CD4-positive, alpha-beta memory T cell (primary cell): ENCODE measurements at regions of chr10 and their contacts with region 1.

Region 1: DNA sequence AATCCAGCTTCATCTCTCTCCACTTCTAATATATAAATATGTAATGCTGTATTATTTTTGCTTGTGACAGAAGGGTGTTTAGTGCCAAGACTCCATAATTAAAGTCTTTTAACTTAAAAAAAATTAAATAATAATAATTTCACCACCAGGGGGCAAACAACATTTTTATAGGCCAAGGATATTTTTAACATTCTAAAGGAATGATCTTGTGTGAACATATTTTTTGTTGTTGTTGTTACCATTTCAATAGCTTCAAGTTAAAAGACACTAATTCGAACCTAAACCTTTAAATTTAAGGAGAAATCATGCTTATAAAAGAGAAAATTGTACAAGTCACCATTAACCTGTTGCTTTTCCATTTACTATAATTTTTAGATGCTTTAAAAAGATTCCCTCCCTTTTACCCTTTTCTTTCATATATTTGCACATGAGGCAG is 7.5 kb upstream of the DNAJC1 start:
- DNase-seq: peak in 4 of 5 donors; percentile 38 to 51 (median 44)
- H3K4me3 ChIP-seq: no peak overlapping the region
- H3K4me3 Mint-ChIP-seq: no peak overlapping the region
- H3K27ac ChIP-seq: no peak overlapping the region
- H3K27ac Mint-ChIP-seq: no peak overlapping the region
- H3K4me1 ChIP-seq: no peaks in the 10 kb centered on the region
- H3K4me1 Mint-ChIP-seq: peaks cover 0 to 4% (median under 1%) of the 10 kb centered on the region in 4 donors
- H3K27me3 ChIP-seq: no peaks in the 10 kb centered on the region
- H3K27me3 Mint-ChIP-seq: peaks cover 5 to 7% of the 10 kb centered on the region in 2 donors

Region 2: DNA sequence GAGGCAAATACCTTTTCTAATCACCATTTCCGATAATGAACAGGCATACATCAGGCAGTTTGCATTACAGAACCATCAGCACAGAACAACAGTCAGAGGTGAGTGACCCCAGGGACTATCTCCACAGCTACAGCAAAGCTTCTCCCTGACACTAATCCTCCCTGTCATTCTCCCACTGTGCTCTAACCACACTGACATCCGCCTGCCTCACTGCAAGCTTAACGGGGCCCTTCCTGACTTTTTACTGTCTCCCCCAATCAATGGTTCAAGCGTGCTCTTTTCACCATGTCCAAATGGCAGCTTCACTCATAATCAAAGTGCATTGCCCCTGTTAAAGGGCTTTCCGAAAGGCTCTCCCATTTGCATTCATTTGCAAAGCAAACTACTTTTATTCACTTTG is 203.8 kb before region 1 on chr10:
- CTCF ChIA-PET with region 1: no interaction called
- POLR2A ChIA-PET with region 1: no interaction called
- intact Hi-C with region 1: no loop called
- DNase-seq: no peak
- H3K4me3 ChIP-seq: no peak overlapping the region
- H3K4me3 Mint-ChIP-seq: no peak overlapping the region
- H3K27ac ChIP-seq: no peak overlapping the region
- H3K27ac Mint-ChIP-seq: no peak overlapping the region
- H3K4me1 ChIP-seq: no peaks in the 10 kb centered on the region
- H3K4me1 Mint-ChIP-seq: peaks cover 0 to 1% (median 0%) of the 10 kb centered on the region in 4 donors
- H3K27me3 ChIP-seq: no peaks in the 10 kb centered on the region
- H3K27me3 Mint-ChIP-seq: no peaks in the 10 kb centered on the region

Region 3: GRCh38 chr10:22022257-22023032 is 11.5 kb after region 1 on chr10:
- CTCF ChIA-PET with region 1: interaction called, 4 read pairs
- POLR2A ChIA-PET with region 1: no interaction called
- intact Hi-C with region 1: loop called (anchors 1 kb)
- DNase-seq: peak; percentile 51 to 75 (median 60)
- H3K4me3 ChIP-seq: peak overlapping the region in 1 of 2 donors; percentile 39
- H3K4me3 Mint-ChIP-seq: peak overlapping the region; percentile 69 to 91 (median 86)
- H3K27ac ChIP-seq: peak overlapping the region; percentile 45
- H3K27ac Mint-ChIP-seq: peak overlapping the region; percentile 75 to 97 (median 95)
- H3K4me1 ChIP-seq: peaks cover 18% of the 10 kb centered on the region
- H3K4me1 Mint-ChIP-seq: peaks cover 15 to 21% (median 19%) of the 10 kb centered on the region in 4 donors
- H3K27me3 ChIP-seq: no peaks in the 10 kb centered on the region
- H3K27me3 Mint-ChIP-seq: peaks cover 0 to 4% of the 10 kb centered on the region in 2 donors

Region 4: GRCh38 chr10:22049646-22050045 is 38.7 kb after region 1 on chr10:
- CTCF ChIA-PET with region 1: no interaction called
- POLR2A ChIA-PET with region 1: no interaction called
- intact Hi-C with region 1: no loop called
- DNase-seq: no peak
- H3K4me3 ChIP-seq: no peak overlapping the region
- H3K4me3 Mint-ChIP-seq: no peak overlapping the region
- H3K27ac ChIP-seq: no peak overlapping the region
- H3K27ac Mint-ChIP-seq: no peak overlapping the region
- H3K4me1 ChIP-seq: no peaks in the 10 kb centered on the region
- H3K4me1 Mint-ChIP-seq: peaks cover 0 to 6% (median under 1%) of the 10 kb centered on the region in 4 donors
- H3K27me3 ChIP-seq: no peaks in the 10 kb centered on the region
- H3K27me3 Mint-ChIP-seq: no peaks in the 10 kb centered on the region

Region 5: GRCh38 chr10:22420787-22421517 is 410.0 kb after region 1 on chr10:
- CTCF ChIA-PET with region 1: interaction called, 11 read pairs
- POLR2A ChIA-PET with region 1: no interaction called
- intact Hi-C with region 1: loop called (anchors 1 kb)
- DNase-seq: peak in 4 of 5 donors; percentile 37 to 41 (median 39)
- H3K4me3 ChIP-seq: no peak overlapping the region
- H3K4me3 Mint-ChIP-seq: no peak overlapping the region
- H3K27ac ChIP-seq: no peak overlapping the region
- H3K27ac Mint-ChIP-seq: no peak overlapping the region
- H3K4me1 ChIP-seq: no peaks in the 10 kb centered on the region
- H3K4me1 Mint-ChIP-seq: no peaks in the 10 kb centered on the region
- H3K27me3 ChIP-seq: no peaks in the 10 kb centered on the region
- H3K27me3 Mint-ChIP-seq: no peaks in the 10 kb centered on the region

Region 6: DNA sequence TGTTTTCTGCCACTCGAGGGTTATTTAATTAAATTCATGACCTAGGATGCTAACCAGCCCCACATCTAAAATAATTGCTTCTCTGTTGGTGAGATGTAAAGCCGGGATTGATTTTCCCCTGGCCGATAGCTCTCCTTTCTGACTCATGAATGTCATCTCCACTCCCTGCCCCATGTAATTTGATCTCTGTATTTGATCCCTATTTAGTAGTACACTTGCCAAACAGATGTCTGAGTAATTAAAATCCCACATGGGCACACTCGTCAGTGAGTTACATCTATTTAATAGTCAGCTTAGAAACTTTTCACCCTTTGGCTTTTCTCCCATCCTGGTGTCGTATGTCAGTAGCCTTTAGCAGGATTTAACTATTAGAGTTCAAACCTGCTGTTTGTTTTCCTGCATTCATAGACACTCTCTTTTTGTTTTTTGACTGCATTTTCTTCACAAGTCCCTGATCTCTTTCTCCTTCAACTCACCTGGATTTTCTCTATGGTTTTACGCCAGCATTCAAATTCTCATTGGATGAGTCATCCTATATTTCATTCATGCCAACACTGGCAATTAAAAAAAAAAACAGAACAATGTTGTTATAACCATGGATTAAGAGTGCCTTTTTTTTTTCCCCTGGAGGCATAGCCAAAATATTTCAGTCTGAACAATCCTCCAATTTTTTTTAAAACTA is 417.0 kb after region 1 on chr10:
- CTCF ChIA-PET with region 1: interaction called, 11 read pairs
- POLR2A ChIA-PET with region 1: no interaction called
- intact Hi-C with region 1: no loop called
- DNase-seq: no peak
- H3K4me3 ChIP-seq: no peak overlapping the region
- H3K4me3 Mint-ChIP-seq: no peak overlapping the region
- H3K27ac ChIP-seq: no peak overlapping the region
- H3K27ac Mint-ChIP-seq: no peak overlapping the region
- H3K4me1 ChIP-seq: no peaks in the 10 kb centered on the region
- H3K4me1 Mint-ChIP-seq: peaks cover 0 to 2% (median 0%) of the 10 kb centered on the region in 4 donors
- H3K27me3 ChIP-seq: no peaks in the 10 kb centered on the region
- H3K27me3 Mint-ChIP-seq: peaks cover 9 to 12% of the 10 kb centered on the region in 2 donors

Region 7: GRCh38 chr10:23067939-23068775 is 1057.2 kb after region 1 on chr10:
- CTCF ChIA-PET with region 1: no interaction called
- POLR2A ChIA-PET with region 1: no interaction called
- intact Hi-C with region 1: loop called (anchors 5 kb)
- DNase-seq: peak; percentile 43 to 51 (median 49)
- H3K4me3 ChIP-seq: no peak overlapping the region
- H3K4me3 Mint-ChIP-seq: peak overlapping the region in 1 of 8 donors; percentile 10
- H3K27ac ChIP-seq: no peak overlapping the region
- H3K27ac Mint-ChIP-seq: peak overlapping the region in 1 of 7 donors; percentile 41
- H3K4me1 ChIP-seq: no peaks in the 10 kb centered on the region
- H3K4me1 Mint-ChIP-seq: peaks cover 0 to 7% (median 1%) of the 10 kb centered on the region in 4 donors
- H3K27me3 ChIP-seq: no peaks in the 10 kb centered on the region
- H3K27me3 Mint-ChIP-seq: peaks cover 4 to 15% of the 10 kb centered on the region in 2 donors